Common myeloid progenitor, CD34-positive (primary cell): ENCODE measurements at regions of chrX and their contacts with region 1.

Region 1: DNA sequence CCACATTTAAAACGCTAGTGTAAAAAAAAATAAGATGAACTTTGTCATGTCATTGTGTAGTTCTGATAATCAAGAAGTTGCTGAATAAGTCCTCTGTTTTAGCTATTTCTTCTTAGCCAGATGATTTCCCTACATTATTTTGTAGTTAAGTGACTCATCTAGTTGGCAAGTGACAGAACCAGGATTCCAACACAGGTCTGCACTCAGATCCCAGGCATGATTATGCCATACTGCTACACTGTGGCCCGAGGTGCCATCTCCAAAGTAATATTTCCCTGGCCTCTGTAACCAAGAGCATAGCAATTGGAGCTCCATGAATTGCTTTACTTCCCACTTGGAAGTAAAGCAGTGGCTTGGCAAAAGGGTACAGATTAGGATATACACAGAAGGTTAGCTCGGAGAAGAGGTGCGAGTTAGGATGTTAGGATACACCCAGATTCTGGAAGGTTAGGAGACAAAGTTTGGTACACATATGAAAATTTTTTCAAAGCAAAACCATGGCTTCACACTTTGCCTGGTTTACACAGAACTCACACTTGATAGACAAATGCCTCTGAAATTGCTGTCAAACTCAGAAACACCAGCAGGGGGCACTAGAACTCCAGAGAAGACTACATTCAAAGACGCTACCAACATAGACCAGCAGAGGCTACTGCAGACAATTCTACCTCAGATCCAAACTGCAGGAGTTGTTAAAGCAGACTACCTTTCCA is 41.4 kb downstream of the SRPX2 start:
- DNase-seq: peak; percentile 78 to 92 (median 86)
- H3K4me3 ChIP-seq: no peak overlapping the region
- H3K27ac ChIP-seq: no peak overlapping the region
- H3K4me1 ChIP-seq: peaks cover 3 to 27% (median 18%) of the 10 kb centered on the region in 4 experiments
- H3K27me3 ChIP-seq: no peaks in the 10 kb centered on the region

Region 2: GRCh38 chrX:100435706-100436105 is 249.7 kb before region 1 on chrX:
- CTCF ChIA-PET with region 1: no interaction called
- POLR2A ChIA-PET with region 1: no interaction called
- DNase-seq: no peak
- H3K4me3 ChIP-seq: no peak overlapping the region
- H3K27ac ChIP-seq: no peak overlapping the region
- H3K4me1 ChIP-seq: no peaks in the 10 kb centered on the region
- H3K27me3 ChIP-seq: peaks cover 0 to 19% (median 0%) of the 10 kb centered on the region in 5 experiments

Region 3: GRCh38 chrX:100674705-100675104 is 10.7 kb before region 1 on chrX:
- CTCF ChIA-PET with region 1: interaction called, 10 read pairs
- POLR2A ChIA-PET with region 1: no interaction called
- DNase-seq: no peak
- H3K4me3 ChIP-seq: no peak overlapping the region
- H3K27ac ChIP-seq: no peak overlapping the region
- H3K4me1 ChIP-seq: peaks cover 0 to 4% (median 3%) of the 10 kb centered on the region in 4 experiments
- H3K27me3 ChIP-seq: peaks cover 0 to 3% (median 0%) of the 10 kb centered on the region in 5 experiments

Region 4: DNA sequence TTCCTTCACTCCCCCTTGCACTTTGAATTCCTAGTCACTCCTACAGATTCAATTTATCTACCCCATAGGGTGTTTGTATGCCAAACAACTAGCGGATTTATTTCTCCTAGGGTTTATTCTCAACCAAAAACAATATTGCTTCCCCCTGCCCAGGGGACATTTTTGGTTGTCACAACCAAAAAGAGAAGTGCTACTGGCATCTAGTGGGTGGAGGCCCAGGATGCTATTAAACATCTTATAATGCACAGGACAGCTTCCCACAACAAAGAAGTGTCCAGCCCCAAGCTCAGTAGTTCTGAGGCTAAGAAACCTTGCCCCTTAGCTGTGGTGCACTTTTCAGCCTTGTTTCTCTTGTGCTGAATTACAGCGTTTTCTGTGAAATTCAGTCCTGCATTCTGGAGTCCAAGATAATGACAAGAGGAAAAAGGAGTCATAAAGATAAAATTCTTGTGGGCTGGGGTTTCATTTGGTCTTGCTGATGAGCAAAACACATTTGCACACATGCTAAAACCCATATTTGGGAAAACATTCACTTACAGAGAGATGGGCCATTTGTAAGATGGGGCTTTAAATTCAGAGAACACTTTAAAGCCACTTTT is 57.7 kb after region 1 on chrX:
- CTCF ChIA-PET with region 1: interaction called, 15 read pairs
- POLR2A ChIA-PET with region 1: no interaction called
- DNase-seq: peak; percentile 78 to 92 (median 85)
- H3K4me3 ChIP-seq: no peak overlapping the region
- H3K27ac ChIP-seq: peak overlapping the region; percentile 19 to 77
- H3K4me1 ChIP-seq: peaks cover 0 to 38% (median 15%) of the 10 kb centered on the region in 4 experiments
- H3K27me3 ChIP-seq: peaks cover 0 to 3% (median 0%) of the 10 kb centered on the region in 5 experiments

Region 5: GRCh38 chrX:100812216-100813158 is 127.0 kb after region 1 on chrX:
- CTCF ChIA-PET with region 1: no interaction called
- POLR2A ChIA-PET with region 1: no interaction called
- DNase-seq: no peak
- H3K4me3 ChIP-seq: no peak overlapping the region
- H3K27ac ChIP-seq: no peak overlapping the region
- H3K4me1 ChIP-seq: no peaks in the 10 kb centered on the region
- H3K27me3 ChIP-seq: peaks cover 0 to 14% (median 3%) of the 10 kb centered on the region in 5 experiments